ENCODE measurements at regions of chr11 and their contacts with region 1.

Region 1: DNA sequence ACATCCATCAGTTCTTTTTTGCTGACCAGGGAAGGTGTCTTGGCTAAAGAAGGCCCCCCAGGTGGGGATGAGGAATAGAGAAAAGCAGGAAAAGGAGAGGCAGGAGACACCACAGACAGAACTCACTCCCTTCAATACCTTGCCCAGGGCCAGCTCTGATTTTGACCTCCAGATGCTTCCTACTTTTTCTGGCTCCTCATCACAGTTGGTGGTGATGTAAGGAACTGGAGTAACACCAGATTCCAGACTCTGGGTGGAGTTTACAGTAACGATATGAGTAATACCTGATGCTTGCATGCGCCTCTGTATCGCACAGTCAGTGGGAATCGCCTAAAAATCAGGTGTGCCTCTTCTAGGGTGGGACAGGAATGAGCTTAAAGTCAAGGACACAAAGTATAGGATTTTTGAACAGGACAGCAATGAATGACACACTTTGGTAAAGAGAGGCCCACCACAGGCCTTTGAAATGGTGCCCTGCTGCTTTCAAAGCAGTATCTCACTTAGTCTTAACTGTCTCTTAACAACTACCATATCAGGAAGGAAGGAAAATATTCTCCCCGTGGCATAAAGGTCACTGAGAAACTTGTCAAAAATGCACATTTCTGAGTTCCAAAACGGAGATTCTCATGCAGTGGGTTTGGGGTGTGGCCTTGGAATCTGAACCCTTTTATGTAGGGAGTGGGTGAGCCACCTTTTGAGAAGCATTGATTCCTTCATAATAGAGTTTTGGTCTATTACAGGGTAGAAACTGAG is 140.8 kb downstream of the SNX19 start:
- DNase-seq: no peak
- ATAC-seq: peak in 2 of 8 donors; percentile 11 to 21
- H3K4me3 ChIP-seq: no peak overlapping the region
- H3K27ac ChIP-seq: no peak overlapping the region
- H3K4me1 ChIP-seq: peaks cover 5 to 45% (median 24%) of the 10 kb centered on the region in 9 donors
- H3K27me3 ChIP-seq: no peaks in the 10 kb centered on the region
- CTCF ChIP-seq: no peak

Region 2: DNA sequence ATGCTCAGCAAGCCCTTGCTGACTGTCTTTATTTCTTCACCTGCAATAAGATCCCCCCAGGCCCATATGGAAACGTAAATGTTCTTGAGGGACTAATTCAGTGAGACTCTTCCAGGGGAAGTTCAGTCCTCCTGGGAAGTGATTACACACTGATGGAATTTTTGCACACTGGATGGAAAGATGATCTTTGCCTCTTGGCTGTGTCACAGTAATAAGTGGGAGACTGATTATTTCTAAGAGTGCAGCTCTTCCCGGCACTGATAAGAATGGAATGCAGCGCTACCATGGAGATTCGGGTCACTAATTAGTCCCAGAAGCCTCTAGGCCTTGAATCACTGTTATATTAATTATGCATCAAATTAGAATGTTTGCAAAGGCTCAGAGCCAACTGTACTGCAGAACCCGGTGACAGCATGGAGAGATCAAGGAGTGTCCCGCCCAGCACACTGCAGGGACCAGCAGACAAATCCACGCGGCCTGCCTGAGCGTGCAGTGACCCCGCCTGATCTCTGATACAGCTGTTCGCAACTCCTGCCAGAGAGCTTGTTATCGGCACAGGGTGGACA is 37.5 kb before region 1 on chr11:
- intact Hi-C with region 1: loop called in 1 of 10 experiments (anchors 2 kb)
- DNase-seq: peak; percentile 72 to 74
- ATAC-seq: peak; percentile 93 to 97 (median 96)
- H3K4me3 ChIP-seq: no peak overlapping the region
- H3K27ac ChIP-seq: peak overlapping the region; percentile 13 to 68 (median 58)
- H3K4me1 ChIP-seq: peaks cover 0 to 23% (median 21%) of the 10 kb centered on the region in 9 donors
- H3K27me3 ChIP-seq: no peaks in the 10 kb centered on the region
- CTCF ChIP-seq: no peak

Region 3: DNA sequence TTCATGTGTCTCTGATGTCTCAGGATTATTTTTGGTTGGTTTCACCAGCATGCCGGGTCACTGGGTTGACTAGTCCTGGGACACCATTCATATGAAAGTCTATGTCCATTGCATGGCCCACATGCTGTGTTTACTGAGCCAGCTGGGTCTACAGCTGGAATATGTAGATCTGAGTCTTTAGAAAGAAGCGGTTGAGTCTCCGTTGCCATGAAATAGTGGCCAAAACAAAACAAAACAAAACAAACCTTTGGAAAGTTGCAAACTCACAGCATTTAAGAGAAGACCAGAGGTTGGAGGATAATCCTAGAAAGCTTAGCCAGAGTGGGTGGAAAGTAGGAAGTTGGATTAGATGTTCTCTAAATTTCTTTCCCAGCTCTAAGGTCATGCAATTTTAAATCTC is 403.1 kb after region 1 on chr11:
- intact Hi-C with region 1: no loop called
- DNase-seq: no peak
- ATAC-seq: no peak
- H3K4me3 ChIP-seq: no peak overlapping the region
- H3K27ac ChIP-seq: no peak overlapping the region
- H3K4me1 ChIP-seq: peaks cover 0 to 7% (median 0%) of the 10 kb centered on the region in 9 donors
- H3K27me3 ChIP-seq: peaks cover 0 to 28% (median 0%) of the 10 kb centered on the region in 7 donors
- CTCF ChIP-seq: no peak

Measured in heart right ventricle (tissue), 16 donors.